Naive thymus-derived CD4-positive, alpha-beta T cell (primary cell): ENCODE measurements at regions of chr14 and their contacts with region 1.

Region 1: GRCh38 chr14:100239840-100240724 is 1.1 kb downstream of the YY1 start:
- DNase-seq: peak; percentile 81 to 91 (median 88)
- ATAC-seq: peak; percentile 65
- H3K4me3 ChIP-seq: peak overlapping the region; percentile 85
- H3K4me3 Mint-ChIP-seq: peak overlapping the region; percentile 88 to 100 (median 94)
- H3K27ac ChIP-seq: peak overlapping the region; percentile 98
- H3K27ac Mint-ChIP-seq: peak overlapping the region; percentile 85 to 99 (median 96)
- H3K4me1 ChIP-seq: peaks cover 35 to 43% of the 10 kb centered on the region in 2 donors
- H3K4me1 Mint-ChIP-seq: peaks cover 41 to 69% (median 53%) of the 10 kb centered on the region in 7 donors
- H3K27me3 ChIP-seq: no peaks in the 10 kb centered on the region
- H3K27me3 Mint-ChIP-seq: peaks cover 0 to 2% (median 0%) of the 10 kb centered on the region in 5 donors

Region 2: DNA sequence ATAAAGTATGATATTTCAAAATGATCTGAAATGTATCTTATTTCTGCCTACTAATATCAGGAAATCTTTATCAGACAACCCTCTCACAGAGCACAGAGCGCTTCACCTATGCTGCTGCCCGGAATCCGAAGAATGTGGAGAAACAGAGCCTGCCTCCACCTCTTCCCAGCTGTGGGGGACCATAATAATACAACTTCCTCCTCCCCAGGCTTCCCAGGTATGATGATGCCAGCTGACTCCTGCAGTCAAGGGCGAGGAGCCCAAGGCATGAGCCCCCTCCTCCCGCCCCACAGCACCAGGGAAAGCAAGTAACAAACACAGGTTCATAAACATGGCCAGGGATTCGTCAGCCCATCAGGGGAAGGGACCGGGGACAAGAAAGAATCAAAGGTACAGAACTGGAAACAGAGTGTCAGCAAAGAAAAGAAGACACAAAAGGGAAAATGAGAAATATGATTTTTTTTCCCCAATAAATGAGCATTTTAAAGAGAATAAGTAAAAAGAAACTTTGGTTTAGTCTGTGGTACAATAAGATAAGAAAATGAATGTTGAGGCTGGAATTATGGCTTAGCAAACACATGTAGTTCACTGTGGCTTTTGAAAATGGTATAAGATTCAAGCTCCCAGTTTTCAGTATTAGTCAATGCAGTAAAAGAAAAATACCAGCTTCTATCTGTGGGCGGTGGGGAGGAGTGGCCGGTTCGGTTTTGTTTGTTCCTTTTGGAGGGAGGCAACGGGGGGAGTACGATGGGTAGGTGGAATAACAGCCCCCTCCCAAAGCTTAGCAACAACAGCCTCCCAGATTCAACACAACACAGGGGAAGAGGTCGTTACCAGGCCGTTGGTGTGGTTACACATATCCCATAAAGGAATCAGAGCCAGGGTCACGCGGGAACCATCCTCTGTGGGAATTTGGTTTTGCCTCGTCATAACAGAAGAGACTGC is 827.7 kb before region 1 on chr14:
- CTCF ChIA-PET with region 1: no interaction called
- POLR2A ChIA-PET with region 1: no interaction called
- intact Hi-C with region 1: no loop called
- DNase-seq: no peak
- ATAC-seq: no peak
- H3K4me3 ChIP-seq: no peak overlapping the region
- H3K4me3 Mint-ChIP-seq: no peak overlapping the region
- H3K27ac ChIP-seq: no peak overlapping the region
- H3K27ac Mint-ChIP-seq: peak overlapping the region in 3 of 9 donors; percentile 26 to 51 (median 40)
- H3K4me1 ChIP-seq: peaks cover 0 to 4% of the 10 kb centered on the region in 2 donors
- H3K4me1 Mint-ChIP-seq: peaks cover 0 to 17% (median 6%) of the 10 kb centered on the region in 7 donors
- H3K27me3 ChIP-seq: no peaks in the 10 kb centered on the region
- H3K27me3 Mint-ChIP-seq: no peaks in the 10 kb centered on the region

Region 3: GRCh38 chr14:99683619-99684355 is 556.3 kb before region 1 on chr14 and contains the start of gene CYP46A1:
- CTCF ChIA-PET with region 1: no interaction called
- POLR2A ChIA-PET with region 1: no interaction called
- intact Hi-C with region 1: loop called in 1 of 2 experiments (anchors 5 kb)
- DNase-seq: peak; percentile 97 to 99 (median 99)
- ATAC-seq: peak; percentile 98
- H3K4me3 ChIP-seq: peak within 1 kb of the TSS; percentile 93
- H3K4me3 Mint-ChIP-seq: peak within 1 kb of the TSS; percentile 79 to 96 (median 92)
- H3K27ac ChIP-seq: peak within 1 kb of the TSS; percentile 75
- H3K27ac Mint-ChIP-seq: peak within 1 kb of the TSS; percentile 52 to 94 (median 83)
- H3K4me1 ChIP-seq: peaks cover 5 to 12% of the 10 kb centered on the region in 2 donors
- H3K4me1 Mint-ChIP-seq: peaks cover 2 to 29% (median 11%) of the 10 kb centered on the region in 7 donors
- H3K27me3 ChIP-seq: no peaks in the 10 kb centered on the region
- H3K27me3 Mint-ChIP-seq: peaks cover 2 to 34% (median 32%) of the 10 kb centered on the region in 5 donors
- total RNA-seq, gene CYP46A1: 0.13 to 0.34 (median 0.32) TPM in 4 of 5 experiments, not detected in the other

Region 4: GRCh38 chr14:100147181-100147631 is 92.9 kb before region 1 on chr14:
- CTCF ChIA-PET with region 1: no interaction called
- POLR2A ChIA-PET with region 1: no interaction called
- intact Hi-C with region 1: loop called in 1 of 2 experiments (anchors 2 kb)
- DNase-seq: peak in 8 of 9 donors; percentile 50 to 77 (median 69)
- ATAC-seq: peak; percentile 73
- H3K4me3 ChIP-seq: peak overlapping the region; percentile 39
- H3K4me3 Mint-ChIP-seq: peak overlapping the region; percentile 33 to 87 (median 83)
- H3K27ac ChIP-seq: peak overlapping the region; percentile 60
- H3K27ac Mint-ChIP-seq: peak overlapping the region; percentile 70 to 96 (median 87)
- H3K4me1 ChIP-seq: peaks cover 0 to 13% of the 10 kb centered on the region in 2 donors
- H3K4me1 Mint-ChIP-seq: peaks cover 16 to 28% (median 20%) of the 10 kb centered on the region in 7 donors
- H3K27me3 ChIP-seq: no peaks in the 10 kb centered on the region
- H3K27me3 Mint-ChIP-seq: peaks cover 0 to 3% (median 0%) of the 10 kb centered on the region in 5 donors

Region 5: DNA sequence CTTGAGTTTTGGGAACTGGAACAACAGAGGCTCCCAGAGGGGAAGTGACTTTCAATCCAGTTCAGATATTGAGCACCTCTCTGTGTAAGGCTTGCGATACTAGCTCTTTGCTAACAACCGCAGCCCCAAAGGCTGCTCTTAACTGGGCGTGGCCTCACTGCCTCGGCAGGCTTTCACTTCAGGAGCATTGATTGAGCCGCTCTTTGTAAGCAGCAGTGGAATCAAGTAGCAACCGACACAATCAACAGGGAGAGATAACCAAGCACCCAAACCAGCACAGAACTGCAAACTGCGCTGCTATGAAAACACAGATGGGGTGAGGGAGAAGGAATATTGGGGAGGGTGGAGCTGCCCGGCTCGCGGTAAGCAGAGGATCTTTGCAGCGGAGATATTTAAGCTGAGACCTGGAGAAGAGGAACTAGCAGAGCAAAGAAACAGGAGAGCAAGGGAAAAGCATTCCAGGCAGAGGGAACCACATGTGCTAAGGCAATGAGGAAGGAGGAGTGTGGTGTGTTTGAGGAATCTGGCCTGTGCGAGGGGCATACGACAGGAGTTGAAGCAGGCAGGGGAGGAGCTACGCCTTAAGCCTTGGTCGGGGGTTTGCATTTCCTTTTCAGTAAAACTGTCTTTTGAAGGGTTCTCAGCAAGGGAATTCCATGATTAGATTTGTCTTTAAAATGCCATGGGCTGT is 18.4 kb before region 1 on chr14:
- CTCF ChIA-PET with region 1: interaction called, 65 read pairs
- POLR2A ChIA-PET with region 1: interaction called, 232 read pairs
- intact Hi-C with region 1: loop called (anchors 1 kb)
- DNase-seq: peak; percentile 22 to 81 (median 74)
- ATAC-seq: peak; percentile 95
- H3K4me3 ChIP-seq: peak overlapping the region; percentile 88
- H3K4me3 Mint-ChIP-seq: no peak overlapping the region
- H3K27ac ChIP-seq: peak overlapping the region; percentile 77
- H3K27ac Mint-ChIP-seq: no peak overlapping the region
- H3K4me1 ChIP-seq: peaks cover 31 to 36% of the 10 kb centered on the region in 2 donors
- H3K4me1 Mint-ChIP-seq: peaks cover 11 to 20% (median 13%) of the 10 kb centered on the region in 7 donors
- H3K27me3 ChIP-seq: no peaks in the 10 kb centered on the region
- H3K27me3 Mint-ChIP-seq: no peaks in the 10 kb centered on the region

Region 6: DNA sequence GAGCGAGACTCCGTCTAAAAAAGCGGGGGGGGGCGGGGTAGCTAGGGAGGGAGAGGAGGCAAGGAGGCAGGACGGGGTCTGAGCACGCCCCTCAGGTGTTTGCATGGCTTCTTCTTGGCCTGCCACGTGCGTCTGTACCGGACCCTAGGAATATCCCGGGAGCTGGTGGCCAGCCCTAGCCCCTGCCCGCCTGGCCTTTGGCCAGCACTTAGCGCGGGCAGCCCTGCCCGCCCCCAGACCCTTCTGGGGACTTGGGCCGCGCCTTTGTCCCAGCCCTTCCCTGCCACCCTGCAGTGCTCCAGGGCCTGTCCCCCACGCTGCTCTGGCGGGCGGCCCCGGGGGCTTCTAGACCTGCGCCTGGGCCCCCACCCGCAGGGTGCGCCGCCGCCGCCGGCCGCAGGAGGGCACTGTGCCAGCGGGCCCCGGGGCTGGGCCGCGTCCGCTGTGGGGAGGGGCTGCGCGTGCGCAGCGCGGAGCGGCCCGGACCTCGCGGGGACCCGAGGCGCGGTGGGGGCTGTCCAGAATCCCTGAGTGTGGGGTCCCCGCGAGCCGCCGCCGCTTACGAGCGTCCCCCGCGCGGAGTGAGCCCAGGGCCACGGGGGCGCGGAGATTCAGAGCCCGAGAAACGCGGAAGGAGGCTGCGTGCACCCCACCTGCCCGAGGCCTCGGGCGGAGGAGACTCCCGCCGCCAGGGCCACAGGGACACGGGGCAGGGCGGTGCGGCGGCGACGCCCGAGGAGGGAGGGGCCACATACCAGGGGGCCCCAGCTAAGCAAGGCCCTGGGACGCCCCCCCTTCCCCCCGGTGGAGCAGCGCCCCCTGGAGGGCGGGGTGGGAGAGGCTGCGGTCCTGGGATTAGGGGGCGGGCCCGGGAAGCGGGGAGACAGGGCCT is 45.2 kb after region 1 on chr14:
- CTCF ChIA-PET with region 1: interaction called, 3 read pairs
- POLR2A ChIA-PET with region 1: interaction called, 5 read pairs
- intact Hi-C with region 1: loop called (anchors 1 kb)
- DNase-seq: peak; percentile 71 to 92 (median 79)
- ATAC-seq: peak; percentile 97
- H3K4me3 ChIP-seq: peak overlapping the region; percentile 71
- H3K4me3 Mint-ChIP-seq: peak overlapping the region; percentile 27 to 91 (median 73)
- H3K27ac ChIP-seq: peak overlapping the region; percentile 85
- H3K27ac Mint-ChIP-seq: peak overlapping the region in 5 of 9 donors; percentile 9 to 87 (median 59)
- H3K4me1 ChIP-seq: peaks cover 0 to 6% of the 10 kb centered on the region in 2 donors
- H3K4me1 Mint-ChIP-seq: peaks cover 2 to 21% (median 8%) of the 10 kb centered on the region in 7 donors
- H3K27me3 ChIP-seq: no peaks in the 10 kb centered on the region
- H3K27me3 Mint-ChIP-seq: no peaks in the 10 kb centered on the region